PC-3 (cell line): ENCODE measurements at regions of chr10 and their contacts with region 1.

Region 1: DNA sequence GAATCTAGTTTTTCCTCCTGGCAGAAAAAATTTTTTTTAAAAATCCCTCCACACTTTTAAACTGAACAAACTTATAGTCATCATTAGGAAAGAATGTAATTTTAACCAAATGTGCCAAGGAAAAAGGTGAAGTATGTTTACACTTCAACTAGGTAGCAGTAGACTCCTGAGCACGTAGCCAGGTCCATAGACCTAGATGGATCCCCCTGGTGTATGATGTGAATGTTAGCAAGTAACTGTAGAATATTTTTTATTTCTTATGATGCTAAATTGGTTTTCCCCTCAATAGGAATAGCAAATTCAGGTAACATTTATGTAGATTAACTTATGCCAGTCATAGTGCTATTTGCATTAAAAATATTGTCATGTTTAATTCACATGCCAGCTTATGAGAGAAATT is 19.6 kb downstream of the CABCOCO1 start:
- DNase-seq: peak; percentile 57
- ATAC-seq: peak; percentile 91
- H3K4me3 ChIP-seq: no peak overlapping the region
- H3K27ac ChIP-seq: no peak overlapping the region
- H3K4me1 ChIP-seq: no peaks in the 10 kb centered on the region
- H3K27me3 ChIP-seq: no peaks in the 10 kb centered on the region
- CTCF ChIP-seq: peak; percentile 74

Region 2: GRCh38 chr10:61701055-61701705 is 18.9 kb after region 1 on chr10:
- CTCF ChIA-PET with region 1: no interaction called
- POLR2A ChIA-PET with region 1: no interaction called
- intact Hi-C with region 1: loop called (anchors 2 kb)
- DNase-seq: peak; percentile 41
- ATAC-seq: peak; percentile 61
- H3K4me3 ChIP-seq: no peak overlapping the region
- H3K27ac ChIP-seq: no peak overlapping the region
- H3K4me1 ChIP-seq: no peaks in the 10 kb centered on the region
- H3K27me3 ChIP-seq: no peaks in the 10 kb centered on the region
- CTCF ChIP-seq: peak; percentile 59